ENCODE measurements at regions of chr11 and their contacts with region 1.

Region 1: GRCh38 chr11:5684646-5685362 is at the start of gene TRIM5:
- DNase-seq: peak; percentile 91
- ATAC-seq: peak; percentile 75
- H3K4me3 ChIP-seq: peak within 1 kb of the TSS; percentile 61 to 94 (median 72)
- H3K4me3 Mint-ChIP-seq: peak within 1 kb of the TSS; percentile 90
- H3K27ac ChIP-seq: peak within 1 kb of the TSS; percentile 81 to 89
- H3K27ac Mint-ChIP-seq: peak within 1 kb of the TSS; percentile 90
- H3K4me1 ChIP-seq: peaks cover 20 to 35% of the 10 kb centered on the region in 2 donors
- H3K4me1 Mint-ChIP-seq: peaks cover 44% of the 10 kb centered on the region
- H3K27me3 ChIP-seq: no peaks in the 10 kb centered on the region
- H3K27me3 Mint-ChIP-seq: no peaks in the 10 kb centered on the region
- CTCF ChIP-seq: peak; percentile 79
- total RNA-seq, gene TRIM5: 35.2 and 39.5 TPM in 2 replicates

Region 2: DNA sequence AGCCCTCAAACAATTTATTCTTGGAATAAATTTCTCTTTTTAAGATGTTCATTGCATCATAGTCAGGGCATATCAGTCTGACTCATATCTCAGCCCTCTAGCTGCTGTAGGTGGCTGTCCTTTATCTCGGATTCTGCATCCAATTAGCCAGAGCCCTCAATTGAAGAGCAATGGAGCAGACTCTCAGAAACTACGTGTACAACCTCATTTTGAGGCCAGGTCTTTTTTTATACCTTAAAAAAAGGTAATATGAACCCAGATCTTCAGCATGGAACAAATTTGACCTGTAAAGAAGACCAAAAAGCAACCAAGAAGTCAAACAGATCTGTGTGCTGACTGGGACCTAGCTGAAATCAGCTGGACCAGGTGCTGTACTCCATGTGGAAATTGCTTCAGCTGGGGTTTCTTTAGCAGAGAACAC is 555.3 kb before region 1 on chr11:
- CTCF ChIA-PET with region 1: no interaction called
- POLR2A ChIA-PET with region 1: no interaction called
- intact Hi-C with region 1: no loop called
- DNase-seq: no peak
- ATAC-seq: no peak
- H3K4me3 ChIP-seq: no peak overlapping the region
- H3K4me3 Mint-ChIP-seq: no peak overlapping the region
- H3K27ac ChIP-seq: no peak overlapping the region
- H3K27ac Mint-ChIP-seq: no peak overlapping the region
- H3K4me1 ChIP-seq: no peaks in the 10 kb centered on the region
- H3K4me1 Mint-ChIP-seq: no peaks in the 10 kb centered on the region
- H3K27me3 ChIP-seq: no peaks in the 10 kb centered on the region
- H3K27me3 Mint-ChIP-seq: no peaks in the 10 kb centered on the region
- CTCF ChIP-seq: no peak

Region 3: DNA sequence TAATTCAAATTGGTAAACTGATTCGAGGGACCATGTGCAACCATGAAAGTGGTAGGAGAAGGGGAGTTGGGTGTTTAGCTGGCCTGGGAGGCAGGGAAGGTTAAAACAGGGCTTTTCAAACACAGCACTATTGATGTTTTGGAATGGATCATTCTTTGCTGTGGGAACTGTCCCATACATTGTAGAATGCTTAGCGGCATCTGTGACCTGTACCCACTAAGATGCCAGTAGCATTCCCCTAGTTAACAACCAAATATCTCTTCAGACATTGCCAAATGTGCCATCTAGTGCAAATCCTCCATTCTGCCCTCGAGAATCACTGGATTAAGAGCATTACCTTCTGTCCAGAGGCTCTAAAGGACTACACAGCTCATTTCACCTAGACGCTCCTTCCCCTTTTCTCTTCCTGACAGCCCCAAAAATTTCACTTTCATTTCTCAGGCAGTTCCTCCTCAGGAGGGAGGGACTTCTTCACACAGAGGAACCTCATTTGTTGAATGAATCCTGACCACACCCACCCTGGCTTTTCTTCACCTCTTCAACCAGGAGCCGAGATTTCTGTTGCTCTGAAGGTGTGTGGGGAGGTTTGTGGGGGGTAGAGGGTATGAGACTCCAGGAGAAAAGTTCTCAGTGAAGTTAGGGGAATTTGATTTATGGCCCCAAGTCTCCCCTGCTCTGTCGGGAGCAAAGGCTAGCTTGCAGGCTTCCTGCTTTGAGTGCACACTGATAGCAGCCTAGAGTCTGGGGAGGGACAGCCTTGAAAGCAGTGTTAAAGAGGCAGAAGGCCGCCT is 60.1 kb before region 1 on chr11 and contains the start of gene TRIM34:
- CTCF ChIA-PET with region 1: interaction called, 7 read pairs
- POLR2A ChIA-PET with region 1: interaction called, 3 read pairs
- intact Hi-C with region 1: loop called (anchors 1 kb)
- DNase-seq: peak; percentile 88
- ATAC-seq: peak; percentile 97
- H3K4me3 ChIP-seq: peak within 1 kb of the TSS; percentile 44 to 83 (median 73)
- H3K4me3 Mint-ChIP-seq: peak within 1 kb of the TSS; percentile 95
- H3K27ac ChIP-seq: peak within 1 kb of the TSS; percentile 63 to 89
- H3K27ac Mint-ChIP-seq: peak within 1 kb of the TSS; percentile 96
- H3K4me1 ChIP-seq: peaks cover 22 to 24% of the 10 kb centered on the region in 2 donors
- H3K4me1 Mint-ChIP-seq: peaks cover 46% of the 10 kb centered on the region
- H3K27me3 ChIP-seq: no peaks in the 10 kb centered on the region
- H3K27me3 Mint-ChIP-seq: no peaks in the 10 kb centered on the region
- CTCF ChIP-seq: no peak
- total RNA-seq, gene TRIM34: 24.1 and 29.1 TPM in 2 replicates

Region 4: DNA sequence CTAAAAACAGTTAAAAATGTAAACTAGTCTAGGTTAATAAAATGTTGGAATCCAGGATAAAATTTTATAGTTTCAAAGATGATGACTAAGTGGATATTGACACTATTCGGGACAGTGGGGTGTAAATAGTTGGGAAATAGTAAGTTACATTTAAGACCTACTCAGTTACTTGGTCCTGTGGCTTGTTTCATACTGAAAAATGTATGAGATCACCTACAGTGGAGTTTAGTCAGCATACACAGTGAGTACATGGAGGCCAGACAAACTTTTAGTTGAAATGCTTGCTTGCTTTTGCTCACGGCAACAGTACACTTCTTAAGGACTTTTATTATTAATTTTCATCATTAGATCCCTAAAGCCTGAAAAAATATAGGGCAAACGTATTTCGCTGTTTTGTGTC is 20.9 kb after region 1 on chr11:
- CTCF ChIA-PET with region 1: interaction called, 82 read pairs
- POLR2A ChIA-PET with region 1: interaction called, 9 read pairs
- intact Hi-C with region 1: loop called (anchors 1 kb)
- DNase-seq: no peak
- ATAC-seq: no peak
- H3K4me3 ChIP-seq: no peak overlapping the region
- H3K4me3 Mint-ChIP-seq: no peak overlapping the region
- H3K27ac ChIP-seq: peak overlapping the region in 1 of 2 donors; percentile 30
- H3K27ac Mint-ChIP-seq: peak overlapping the region; percentile 53
- H3K4me1 ChIP-seq: peaks cover 3 to 11% of the 10 kb centered on the region in 2 donors
- H3K4me1 Mint-ChIP-seq: peaks cover 32% of the 10 kb centered on the region
- H3K27me3 ChIP-seq: no peaks in the 10 kb centered on the region
- H3K27me3 Mint-ChIP-seq: no peaks in the 10 kb centered on the region
- CTCF ChIP-seq: no peak

Region 5: GRCh38 chr11:5808500-5809121 is 123.8 kb after region 1 on chr11 and contains the start of gene OR52N2:
- CTCF ChIA-PET with region 1: interaction called, 27 read pairs
- POLR2A ChIA-PET with region 1: no interaction called
- intact Hi-C with region 1: loop called (anchors 1 kb)
- DNase-seq: peak; percentile 84
- ATAC-seq: peak; percentile 91
- H3K4me3 ChIP-seq: peak within 1 kb of the TSS; percentile 52 to 66 (median 64)
- H3K4me3 Mint-ChIP-seq: peak within 1 kb of the TSS; percentile 91
- H3K27ac ChIP-seq: peak within 1 kb of the TSS in 1 of 2 donors; percentile 24
- H3K27ac Mint-ChIP-seq: no peak within 1 kb of the TSS
- H3K4me1 ChIP-seq: peaks cover 10 to 12% of the 10 kb centered on the region in 2 donors
- H3K4me1 Mint-ChIP-seq: peaks cover 12% of the 10 kb centered on the region
- H3K27me3 ChIP-seq: peaks cover 0 to 11% (median 9%) of the 10 kb centered on the region in 4 experiments
- H3K27me3 Mint-ChIP-seq: peaks cover 39% of the 10 kb centered on the region
- CTCF ChIP-seq: peak; percentile 93
- total RNA-seq, gene OR52N2: not detected in 2 replicates

Region 6: GRCh38 chr11:6481012-6481923 is 796.5 kb after region 1 on chr11 and contains the starts of genes ARFIP2 and TIMM10B:
- CTCF ChIA-PET with region 1: no interaction called
- POLR2A ChIA-PET with region 1: no interaction called
- intact Hi-C with region 1: loop called (anchors 10 kb)
- DNase-seq: peak; percentile 98
- ATAC-seq: peak; percentile 96
- H3K4me3 ChIP-seq: peak within 1 kb of the TSS; percentile 26 to 92 (median 83)
- H3K4me3 Mint-ChIP-seq: peak within 1 kb of the TSS; percentile 97
- H3K27ac ChIP-seq: peak within 1 kb of the TSS; percentile 90 to 96
- H3K27ac Mint-ChIP-seq: peak within 1 kb of the TSS; percentile 97
- H3K4me1 ChIP-seq: peaks cover 20 to 27% of the 10 kb centered on the region in 2 donors
- H3K4me1 Mint-ChIP-seq: peaks cover 39% of the 10 kb centered on the region
- H3K27me3 ChIP-seq: no peaks in the 10 kb centered on the region
- H3K27me3 Mint-ChIP-seq: no peaks in the 10 kb centered on the region
- CTCF ChIP-seq: no peak
- total RNA-seq, gene ARFIP2: 46.8 and 47.5 TPM in 2 replicates
- total RNA-seq, gene TIMM10B: 62.1 and 63.7 TPM in 2 replicates